ENCODE measurements at regions of chr6 and their contacts with region 1.

Region 1: GRCh38 chr6:5684320-5685053 is 322.2 kb downstream of the NRN1 start:
- DNase-seq: no peak
- H3K4me3 ChIP-seq: no peak overlapping the region
- H3K27ac ChIP-seq: no peak overlapping the region
- H3K4me1 ChIP-seq: no peaks in the 10 kb centered on the region
- H3K27me3 ChIP-seq: no peaks in the 10 kb centered on the region
- CTCF ChIP-seq: no peak

Region 2: GRCh38 chr6:5752391-5752680 is 67.8 kb after region 1 on chr6:
- intact Hi-C with region 1: loop called (anchors 5 kb)
- DNase-seq: no peak
- H3K4me3 ChIP-seq: no peak overlapping the region
- H3K27ac ChIP-seq: no peak overlapping the region
- H3K4me1 ChIP-seq: no peaks in the 10 kb centered on the region
- H3K27me3 ChIP-seq: no peaks in the 10 kb centered on the region
- CTCF ChIP-seq: no peak